ENCODE measurements at regions of chr3 and their contacts with region 1.

Region 1: DNA sequence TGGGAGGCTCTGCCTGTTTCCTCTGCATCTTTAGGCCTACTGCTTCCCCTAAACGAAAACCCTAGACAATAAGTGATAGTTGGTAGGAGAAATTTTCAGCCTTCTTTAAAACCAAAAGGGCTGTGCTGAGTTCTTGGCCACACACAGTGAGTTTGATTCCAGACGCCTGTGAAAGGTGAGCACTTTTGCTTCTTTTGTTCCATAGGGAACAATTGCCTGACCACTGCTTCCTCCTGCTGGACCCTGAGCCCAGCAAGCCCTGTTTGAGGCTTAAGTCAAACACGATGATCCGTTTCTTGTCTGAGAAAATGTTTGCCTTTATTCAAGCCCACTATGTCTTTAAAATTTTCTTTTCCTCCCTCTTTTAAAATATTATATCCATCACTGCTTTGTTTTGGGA is 493.9 kb downstream of the ZIC1 start:
- DNase-seq: no peak
- ATAC-seq: no peak
- H3K4me3 ChIP-seq: no peak overlapping the region
- H3K27ac ChIP-seq: no peak overlapping the region
- H3K4me1 ChIP-seq: no peaks in the 10 kb centered on the region
- H3K27me3 ChIP-seq: no peaks in the 10 kb centered on the region
- CTCF ChIP-seq: no peak

Region 2: DNA sequence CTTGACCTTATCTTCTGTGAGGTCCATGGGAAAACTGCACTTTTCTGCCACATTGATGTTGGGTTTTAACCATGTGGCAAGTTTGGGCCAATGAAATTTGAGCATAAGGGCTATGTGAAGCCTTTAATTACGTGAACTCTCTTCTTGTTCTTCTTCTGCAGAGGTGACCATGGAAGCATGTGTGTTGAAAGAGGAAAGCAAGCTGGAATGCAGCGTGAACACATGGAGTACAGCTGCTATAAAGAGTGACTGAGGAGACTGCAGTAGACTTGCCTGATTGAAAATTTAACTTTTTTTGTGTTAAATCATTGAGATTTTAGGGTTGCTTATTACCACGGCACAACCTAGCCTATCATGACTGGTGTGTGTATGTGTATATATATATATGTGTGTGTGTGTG is 146.6 kb before region 1 on chr3:
- CTCF ChIA-PET with region 1: no interaction called
- POLR2A ChIA-PET with region 1: interaction called, 10 read pairs
- in situ Hi-C with region 1: no loop called
- intact Hi-C with region 1: no loop called
- DNase-seq: no peak
- ATAC-seq: no peak
- H3K4me3 ChIP-seq: no peak overlapping the region
- H3K27ac ChIP-seq: no peak overlapping the region
- H3K4me1 ChIP-seq: no peaks in the 10 kb centered on the region
- H3K27me3 ChIP-seq: no peaks in the 10 kb centered on the region
- CTCF ChIP-seq: no peak

Region 3: DNA sequence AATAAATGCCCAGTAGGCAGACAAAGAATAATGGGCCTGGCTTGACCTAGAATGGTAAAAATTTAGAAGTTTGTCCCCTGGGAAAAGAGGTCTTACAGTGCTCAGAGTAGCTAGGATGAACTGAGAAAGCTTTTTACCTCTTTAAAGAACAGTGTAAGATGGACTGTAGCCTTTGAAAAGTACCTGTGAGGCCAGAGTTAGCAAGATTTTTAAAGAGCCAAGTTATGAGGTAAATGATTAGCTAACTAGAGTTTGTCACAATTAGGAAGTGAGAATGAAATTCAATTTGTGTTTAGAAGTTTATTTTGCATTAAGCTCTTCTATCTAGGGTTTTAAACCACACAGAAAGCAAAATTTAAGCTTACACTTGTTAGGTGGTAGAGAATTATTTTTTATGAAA is 12.9 kb before region 1 on chr3:
- CTCF ChIA-PET with region 1: no interaction called
- POLR2A ChIA-PET with region 1: no interaction called
- in situ Hi-C with region 1: no loop called
- intact Hi-C with region 1: no loop called
- DNase-seq: no peak
- ATAC-seq: no peak
- H3K4me3 ChIP-seq: no peak overlapping the region
- H3K27ac ChIP-seq: no peak overlapping the region
- H3K4me1 ChIP-seq: no peaks in the 10 kb centered on the region
- H3K27me3 ChIP-seq: no peaks in the 10 kb centered on the region
- CTCF ChIP-seq: no peak

Region 4: GRCh38 chr3:148238421-148238821 is 335.4 kb after region 1 on chr3:
- CTCF ChIA-PET with region 1: no interaction called
- POLR2A ChIA-PET with region 1: no interaction called
- in situ Hi-C with region 1: no loop called
- intact Hi-C with region 1: no loop called
- DNase-seq: no peak
- ATAC-seq: no peak
- H3K4me3 ChIP-seq: no peak overlapping the region
- H3K27ac ChIP-seq: no peak overlapping the region
- H3K4me1 ChIP-seq: no peaks in the 10 kb centered on the region
- H3K27me3 ChIP-seq: no peaks in the 10 kb centered on the region
- CTCF ChIP-seq: no peak